Activated T-helper 1 cell treated with anti-CD3 and anti-CD28 coated beads, Interleukin-12 subunit alpha, Interleukin-12 subunit beta, Interleukin-2, Interleukin-4 antibody, amounts not matched to agents 30 ng/mL and 10 ng/mL and 1 ng/mL, durations not matched to agents 14 hours and 24 hours and 36 hours (primary cell): ENCODE measurements at regions of chr5 and their contacts with region 1.

Region 1: DNA sequence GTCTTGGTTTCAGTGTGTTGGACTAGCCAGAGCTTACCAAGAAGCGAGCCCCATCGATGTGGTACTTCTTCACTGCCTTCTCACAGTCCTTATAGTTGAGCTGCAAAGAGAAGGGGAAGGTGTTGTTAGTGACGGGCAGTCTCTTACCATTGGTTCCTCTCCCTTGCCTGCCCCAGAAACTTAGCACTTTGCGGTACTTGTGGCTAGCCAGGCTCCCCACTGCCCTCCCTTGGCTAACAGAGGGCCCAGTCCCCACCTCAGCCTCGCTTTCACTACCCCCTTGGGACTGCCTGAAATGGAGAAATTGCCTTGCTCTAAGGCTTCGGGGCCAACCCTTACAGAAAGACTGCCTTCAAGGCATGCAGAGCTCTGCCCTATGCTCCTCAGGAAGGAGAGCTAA is 4.3 kb downstream of the LCP2 start:
- DNase-seq: no peak
- H3K4me3 Mint-ChIP-seq: peak overlapping the region; percentile 99
- H3K27ac Mint-ChIP-seq: peak overlapping the region; percentile 87
- H3K4me1 Mint-ChIP-seq: peaks cover 79% of the 10 kb centered on the region
- H3K27me3 Mint-ChIP-seq: no peaks in the 10 kb centered on the region

Region 2: GRCh38 chr5:170312666-170313065 is 19.4 kb after region 1 on chr5:
- intact Hi-C with region 1: loop called (anchors 1 kb)
- DNase-seq: peak; percentile 61
- H3K4me3 Mint-ChIP-seq: peak overlapping the region; percentile 80
- H3K27ac Mint-ChIP-seq: peak overlapping the region; percentile 91
- H3K4me1 Mint-ChIP-seq: peaks cover 54% of the 10 kb centered on the region
- H3K27me3 Mint-ChIP-seq: no peaks in the 10 kb centered on the region